ENCODE measurements at regions of chr16 and their contacts with region 1.

Region 1: GRCh38 chr16:82331974-82332750 is 162.1 kb upstream of the MPHOSPH6 start:
- DNase-seq: no peak
- ATAC-seq: no peak

Region 2: GRCh38 chr16:82229796-82230619 is 102.2 kb before region 1 on chr16:
- intact Hi-C with region 1: no loop called
- DNase-seq: peak; percentile 65
- ATAC-seq: peak; percentile 60

Region 3: DNA sequence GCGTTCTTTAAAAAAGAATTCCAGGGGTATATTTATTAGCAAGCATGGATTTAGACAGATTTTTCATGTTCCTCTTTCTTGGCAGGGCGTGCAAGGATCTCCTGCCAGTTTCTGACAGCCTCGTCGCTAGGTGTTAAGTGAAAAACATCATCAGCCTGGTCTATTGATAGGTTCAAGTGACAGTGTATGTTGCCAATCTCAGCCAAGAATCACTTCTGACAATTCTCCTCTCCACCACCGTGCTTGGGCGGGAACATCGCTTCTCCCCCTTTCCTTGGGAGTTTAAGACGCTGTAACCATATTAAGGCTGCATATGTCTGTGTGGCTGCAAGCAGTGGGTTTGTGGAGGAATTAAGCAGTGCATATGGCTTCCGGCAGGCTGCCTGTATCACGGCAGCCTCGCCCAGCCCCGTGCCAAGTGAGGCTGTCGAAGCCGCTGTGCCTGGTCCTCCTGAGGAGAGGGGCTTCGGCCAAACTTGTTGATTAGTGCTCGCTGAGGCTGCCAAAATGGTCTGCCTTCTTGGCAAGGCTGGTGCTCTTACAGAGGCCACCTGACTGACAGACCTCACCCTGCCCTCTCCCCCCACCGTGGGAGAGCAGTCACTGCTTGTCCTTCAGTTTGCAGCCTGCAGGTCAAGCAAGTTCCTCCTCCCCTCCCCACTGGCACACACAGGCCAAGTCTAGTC is 30.0 kb before region 1 on chr16:
- intact Hi-C with region 1: loop called (anchors 2 kb)
- DNase-seq: peak; percentile 67
- ATAC-seq: peak; percentile 93

Region 4: DNA sequence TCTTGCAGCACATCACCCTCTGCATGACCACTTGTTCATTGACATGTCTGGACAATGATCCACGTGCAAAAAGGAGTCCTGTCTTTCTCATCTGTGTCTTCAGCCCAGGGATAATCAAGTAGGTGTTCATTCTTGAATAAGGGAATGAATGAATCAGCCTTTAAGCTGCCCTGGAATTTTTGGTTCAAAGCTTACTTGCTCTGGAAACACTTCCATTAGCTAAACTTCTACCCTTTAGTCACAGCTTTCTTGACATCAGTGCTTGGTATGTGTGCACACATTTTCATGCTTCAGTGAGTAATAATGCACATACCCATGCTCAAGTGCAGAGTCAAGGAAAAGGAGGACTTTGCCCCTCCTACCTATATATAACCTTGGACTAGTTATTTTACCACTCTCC is 191.7 kb after region 1 on chr16:
- intact Hi-C with region 1: no loop called
- DNase-seq: no peak
- ATAC-seq: no peak